Activated naive CD4-positive, alpha-beta T cell treated with anti-CD3 and anti-CD28 coated beads for 36 hours (primary cell): ENCODE measurements at regions of chr14 and their contacts with region 1.

Region 1: GRCh38 chr14:23320774-23321571 is at the start of gene PABPN1:
- DNase-seq: peak; percentile 99
- H3K4me3 Mint-ChIP-seq: peak within 1 kb of the TSS; percentile 94
- H3K27ac Mint-ChIP-seq: peak within 1 kb of the TSS; percentile 96
- H3K4me1 Mint-ChIP-seq: peaks cover 18% of the 10 kb centered on the region
- H3K27me3 Mint-ChIP-seq: no peaks in the 10 kb centered on the region
- total RNA-seq, gene PABPN1: 194 to 204 TPM

Region 2: DNA sequence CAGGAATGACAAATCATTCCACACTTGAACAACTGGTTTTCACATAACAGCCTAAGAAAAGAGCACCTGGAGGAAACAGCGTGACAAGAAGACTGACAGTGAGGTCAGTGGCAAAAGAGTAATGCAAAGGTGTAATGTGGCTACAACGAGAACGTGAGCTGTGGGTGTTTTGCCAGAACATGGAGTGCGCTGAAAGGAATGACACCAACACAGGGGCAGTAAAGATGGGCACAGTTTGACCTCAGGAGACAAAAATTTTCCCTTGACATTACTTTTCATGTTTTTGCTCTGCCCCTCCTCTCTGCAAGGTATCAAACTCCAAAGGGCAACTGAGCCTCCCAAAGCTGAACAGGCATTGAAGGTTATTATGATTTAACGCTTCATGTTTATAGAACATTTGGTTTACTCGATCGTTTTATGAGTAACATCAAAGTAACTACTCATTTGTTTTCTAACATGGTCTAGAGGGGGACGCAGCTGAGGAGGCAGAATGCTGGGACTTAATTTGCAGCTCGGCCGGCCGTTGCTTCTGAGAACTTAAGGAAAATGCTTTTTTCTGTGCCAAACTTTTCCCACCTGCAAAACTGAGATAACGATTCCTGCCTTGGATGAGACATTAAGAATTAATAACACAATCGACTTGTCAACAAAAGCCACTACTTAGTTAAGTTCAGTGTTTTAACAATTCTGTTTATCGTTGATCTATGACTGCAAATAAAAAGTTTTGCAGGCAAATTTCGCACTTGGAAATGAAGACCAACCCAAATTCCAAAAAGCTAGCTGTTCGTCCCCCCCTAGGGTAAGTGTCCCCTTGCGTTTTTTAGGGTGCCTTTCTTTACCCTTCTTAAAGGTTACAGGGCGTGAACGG is 365.0 kb before region 1 on chr14:
- CTCF ChIA-PET with region 1: no interaction called
- intact Hi-C with region 1: loop called (anchors 2 kb)
- DNase-seq: no peak
- H3K4me3 Mint-ChIP-seq: peak overlapping the region; percentile 89
- H3K27ac Mint-ChIP-seq: peak overlapping the region; percentile 84
- H3K4me1 Mint-ChIP-seq: peaks cover 22% of the 10 kb centered on the region
- H3K27me3 Mint-ChIP-seq: no peaks in the 10 kb centered on the region

Region 3: DNA sequence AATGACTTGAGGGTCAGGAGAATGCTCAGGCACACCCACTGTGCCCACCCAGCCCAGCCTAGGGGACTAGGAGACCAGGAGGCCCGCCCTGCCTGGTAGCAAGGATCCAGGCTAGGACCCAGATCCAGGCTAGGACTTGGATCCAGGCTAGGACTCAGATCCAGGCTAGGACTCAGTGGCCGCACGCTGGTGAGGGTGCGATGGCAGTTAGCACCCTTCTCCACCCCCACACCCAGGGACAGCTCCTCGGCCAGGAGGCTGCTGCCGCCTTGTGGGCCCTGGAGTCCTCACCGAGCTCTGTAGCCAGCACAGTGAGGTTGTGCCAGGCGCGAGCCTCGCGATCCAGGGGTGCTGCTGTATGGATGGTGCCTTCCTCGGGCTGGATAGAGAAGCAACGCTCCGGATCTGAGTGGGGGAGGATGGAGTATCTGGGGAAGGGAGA is 268.8 kb before region 1 on chr14:
- CTCF ChIA-PET with region 1: no interaction called
- intact Hi-C with region 1: no loop called
- DNase-seq: no peak
- H3K4me3 Mint-ChIP-seq: no peak overlapping the region
- H3K27ac Mint-ChIP-seq: no peak overlapping the region
- H3K4me1 Mint-ChIP-seq: peaks cover 12% of the 10 kb centered on the region
- H3K27me3 Mint-ChIP-seq: peaks cover 8% of the 10 kb centered on the region

Region 4: DNA sequence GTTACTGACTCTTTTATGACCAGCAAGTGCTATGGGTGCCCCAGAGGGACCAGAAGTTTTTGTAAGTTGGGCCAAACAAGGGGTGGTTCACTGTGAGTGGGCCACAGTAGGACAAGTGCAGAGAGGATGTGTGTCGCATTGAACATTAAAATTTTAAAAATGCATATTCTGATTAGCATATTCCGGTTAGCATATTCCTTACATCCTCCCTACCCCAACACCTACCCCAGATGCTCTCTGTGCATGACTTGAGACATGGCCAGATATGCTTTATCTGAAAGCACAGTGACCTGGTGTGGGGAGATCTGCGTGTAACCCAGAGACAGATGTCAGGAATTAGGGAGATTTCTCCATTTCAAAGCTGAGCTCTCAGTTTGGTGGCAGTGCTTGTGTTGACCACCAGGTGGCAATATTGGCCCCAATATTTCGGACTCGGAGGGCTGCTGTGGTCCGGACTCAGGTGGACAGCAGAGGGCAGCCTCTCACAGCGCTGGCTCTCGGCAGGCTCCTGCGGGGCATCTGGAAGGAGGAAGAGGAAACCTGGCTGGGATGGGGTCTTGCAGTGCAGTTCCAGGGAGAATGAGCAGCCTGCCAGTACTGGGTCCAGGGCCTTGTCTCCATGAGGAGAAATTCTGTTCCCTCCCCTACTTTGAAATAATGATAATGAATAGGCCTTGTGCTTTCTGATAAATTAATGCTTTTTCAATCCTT is 200.3 kb before region 1 on chr14:
- CTCF ChIA-PET with region 1: interaction called, 16 read pairs
- intact Hi-C with region 1: loop called (anchors 1 kb)
- DNase-seq: peak; percentile 94
- H3K4me3 Mint-ChIP-seq: no peak overlapping the region
- H3K27ac Mint-ChIP-seq: peak overlapping the region; percentile 87
- H3K4me1 Mint-ChIP-seq: peaks cover 41% of the 10 kb centered on the region
- H3K27me3 Mint-ChIP-seq: no peaks in the 10 kb centered on the region

Region 5: DNA sequence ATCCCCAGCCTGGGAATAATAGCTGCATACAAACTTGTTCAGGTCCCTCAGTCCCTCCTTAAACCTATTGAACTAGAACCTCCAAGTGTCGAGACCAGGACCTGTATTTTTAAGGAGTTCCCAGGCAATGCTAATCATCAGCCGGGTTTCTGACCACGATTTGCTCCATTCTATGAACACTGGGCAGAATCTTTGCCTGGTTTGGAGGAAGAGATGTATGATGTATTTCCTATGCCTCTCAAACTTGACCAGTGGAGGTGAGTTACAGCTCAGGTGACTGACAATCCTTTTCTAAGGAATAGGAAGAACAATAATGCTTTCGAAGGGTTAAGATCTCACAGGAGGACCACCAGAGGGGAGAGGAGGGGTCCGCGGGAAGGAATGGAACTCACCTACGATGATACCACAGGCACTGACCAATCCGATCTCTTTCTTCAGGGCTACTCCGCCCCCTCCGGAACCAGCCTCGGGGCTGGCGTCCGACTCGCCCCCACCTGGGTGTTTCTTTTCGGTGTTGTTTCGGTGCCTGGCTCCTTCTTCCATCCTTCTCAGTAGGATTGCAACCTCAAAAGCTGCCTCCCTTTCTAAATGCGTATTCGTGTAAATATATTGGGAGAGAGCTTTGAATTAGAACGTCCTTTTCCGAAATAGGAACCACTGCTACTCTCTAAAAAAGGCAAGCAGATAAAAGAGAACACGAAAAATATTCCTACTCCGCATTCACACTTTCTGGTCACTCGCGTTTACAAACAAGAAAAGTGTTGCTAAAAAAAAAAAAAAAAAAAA is 138.4 kb before region 1 on chr14:
- CTCF ChIA-PET with region 1: no interaction called
- intact Hi-C with region 1: no loop called
- DNase-seq: peak; percentile 56
- H3K4me3 Mint-ChIP-seq: no peak overlapping the region
- H3K27ac Mint-ChIP-seq: no peak overlapping the region
- H3K4me1 Mint-ChIP-seq: peaks cover 4% of the 10 kb centered on the region
- H3K27me3 Mint-ChIP-seq: peaks cover 11% of the 10 kb centered on the region

Region 6: GRCh38 chr14:23352511-23353432 is 31.8 kb after region 1 on chr14 and contains the start of gene SLC22A17:
- CTCF ChIA-PET with region 1: interaction called, 3 read pairs
- intact Hi-C with region 1: loop called (anchors 1 kb)
- DNase-seq: peak; percentile 72
- H3K4me3 Mint-ChIP-seq: peak within 1 kb of the TSS; percentile 71
- H3K27ac Mint-ChIP-seq: no peak within 1 kb of the TSS
- H3K4me1 Mint-ChIP-seq: peaks cover 6% of the 10 kb centered on the region
- H3K27me3 Mint-ChIP-seq: peaks cover 4% of the 10 kb centered on the region
- total RNA-seq, gene SLC22A17: 3.5 to 4.8 TPM

Region 7: GRCh38 chr14:23567192-23568020 is 246.4 kb after region 1 on chr14 and contains the start of gene AP1G2:
- CTCF ChIA-PET with region 1: interaction called, 3 read pairs
- intact Hi-C with region 1: loop called (anchors 1 kb)
- DNase-seq: peak; percentile 96
- H3K4me3 Mint-ChIP-seq: peak within 1 kb of the TSS; percentile 100
- H3K27ac Mint-ChIP-seq: peak within 1 kb of the TSS; percentile 97
- H3K4me1 Mint-ChIP-seq: peaks cover 26% of the 10 kb centered on the region
- H3K27me3 Mint-ChIP-seq: no peaks in the 10 kb centered on the region
- total RNA-seq, gene AP1G2: 205 to 216 TPM

Region 8: GRCh38 chr14:24232121-24232644 is 911.2 kb after region 1 on chr14 and contains the start of gene NEDD8:
- CTCF ChIA-PET with region 1: no interaction called
- intact Hi-C with region 1: loop called (anchors 1 kb)
- DNase-seq: peak; percentile 96
- H3K4me3 Mint-ChIP-seq: peak within 1 kb of the TSS; percentile 98
- H3K27ac Mint-ChIP-seq: peak within 1 kb of the TSS; percentile 97
- H3K4me1 Mint-ChIP-seq: peaks cover 52% of the 10 kb centered on the region
- H3K27me3 Mint-ChIP-seq: no peaks in the 10 kb centered on the region
- total RNA-seq, gene NEDD8: 172 to 196 TPM